Naive thymus-derived CD4-positive, alpha-beta T cell (primary cell): ENCODE measurements at regions of chrX and their contacts with region 1.

Region 1: GRCh38 chrX:119791438-119792231 is at the start of gene RPL39:
- DNase-seq: peak; percentile 61 to 88 (median 82)
- ATAC-seq: peak; percentile 96
- H3K4me3 ChIP-seq: peak within 1 kb of the TSS; percentile 85
- H3K4me3 Mint-ChIP-seq: peak within 1 kb of the TSS; percentile 87 to 96 (median 92)
- H3K27ac ChIP-seq: peak within 1 kb of the TSS; percentile 91
- H3K27ac Mint-ChIP-seq: peak within 1 kb of the TSS; percentile 89 to 98 (median 97)
- H3K4me1 ChIP-seq: peaks cover 16 to 24% of the 10 kb centered on the region in 2 donors
- H3K4me1 Mint-ChIP-seq: peaks cover 5 to 33% (median 21%) of the 10 kb centered on the region in 7 donors
- H3K27me3 ChIP-seq: no peaks in the 10 kb centered on the region
- H3K27me3 Mint-ChIP-seq: no peaks in the 10 kb centered on the region
- total RNA-seq, gene RPL39: 2,181 to 4,347 (median 3,799) TPM

Region 2: DNA sequence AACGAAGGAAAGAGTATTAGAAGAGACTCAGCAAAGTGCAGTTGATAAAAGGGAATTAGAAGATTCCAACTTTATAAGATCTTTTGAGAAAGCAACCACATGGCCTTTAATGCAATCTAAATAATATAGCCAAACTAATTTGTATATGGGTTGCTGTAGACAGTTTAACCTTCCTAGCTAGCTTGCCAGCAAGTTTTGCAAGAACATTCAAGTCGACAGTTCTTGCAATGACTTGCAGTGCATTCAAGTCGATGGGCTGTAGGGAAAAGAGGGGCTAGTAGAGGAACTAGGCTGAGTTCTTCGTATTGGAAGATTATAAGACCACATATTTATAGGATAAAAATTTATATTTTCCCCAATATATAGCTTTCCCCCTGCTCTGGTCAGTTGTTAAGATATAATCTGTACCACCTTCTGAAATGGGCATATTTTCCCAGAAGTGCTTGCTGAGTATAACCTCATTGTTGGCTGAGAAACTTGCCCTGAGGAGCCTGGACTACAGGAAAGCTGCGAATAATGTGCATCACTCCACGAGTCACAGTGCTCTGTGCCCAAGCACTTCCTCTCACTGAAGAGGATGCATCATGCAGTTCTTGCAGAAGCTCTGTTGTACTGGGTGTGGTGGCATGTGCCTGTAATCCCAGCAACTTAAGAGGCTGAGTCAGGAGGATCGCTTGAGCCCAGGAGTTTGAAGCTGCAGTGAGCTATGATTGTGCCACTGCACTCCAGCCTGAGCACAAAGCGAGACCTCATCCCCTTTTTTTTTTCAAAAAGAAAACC is 1239.3 kb before region 1 on chrX:
- CTCF ChIA-PET with region 1: no interaction called
- POLR2A ChIA-PET with region 1: no interaction called
- intact Hi-C with region 1: no loop called
- DNase-seq: no peak
- ATAC-seq: peak; percentile 74
- H3K4me3 ChIP-seq: no peak overlapping the region
- H3K4me3 Mint-ChIP-seq: no peak overlapping the region
- H3K27ac ChIP-seq: no peak overlapping the region
- H3K27ac Mint-ChIP-seq: peak overlapping the region in 4 of 9 donors; percentile 21 to 67 (median 42)
- H3K4me1 ChIP-seq: no peaks in the 10 kb centered on the region
- H3K4me1 Mint-ChIP-seq: peaks cover 4 to 30% (median 11%) of the 10 kb centered on the region in 7 donors
- H3K27me3 ChIP-seq: no peaks in the 10 kb centered on the region
- H3K27me3 Mint-ChIP-seq: no peaks in the 10 kb centered on the region

Region 3: GRCh38 chrX:119589810-119590209 is 201.8 kb before region 1 on chrX:
- CTCF ChIA-PET with region 1: no interaction called
- POLR2A ChIA-PET with region 1: no interaction called
- intact Hi-C with region 1: no loop called
- DNase-seq: no peak
- ATAC-seq: no peak
- H3K4me3 ChIP-seq: no peak overlapping the region
- H3K4me3 Mint-ChIP-seq: no peak overlapping the region
- H3K27ac ChIP-seq: no peak overlapping the region
- H3K27ac Mint-ChIP-seq: peak overlapping the region in 1 of 9 donors; percentile 42
- H3K4me1 ChIP-seq: no peaks in the 10 kb centered on the region
- H3K4me1 Mint-ChIP-seq: peaks cover 0 to 5% (median 0%) of the 10 kb centered on the region in 7 donors
- H3K27me3 ChIP-seq: no peaks in the 10 kb centered on the region
- H3K27me3 Mint-ChIP-seq: no peaks in the 10 kb centered on the region

Region 4: DNA sequence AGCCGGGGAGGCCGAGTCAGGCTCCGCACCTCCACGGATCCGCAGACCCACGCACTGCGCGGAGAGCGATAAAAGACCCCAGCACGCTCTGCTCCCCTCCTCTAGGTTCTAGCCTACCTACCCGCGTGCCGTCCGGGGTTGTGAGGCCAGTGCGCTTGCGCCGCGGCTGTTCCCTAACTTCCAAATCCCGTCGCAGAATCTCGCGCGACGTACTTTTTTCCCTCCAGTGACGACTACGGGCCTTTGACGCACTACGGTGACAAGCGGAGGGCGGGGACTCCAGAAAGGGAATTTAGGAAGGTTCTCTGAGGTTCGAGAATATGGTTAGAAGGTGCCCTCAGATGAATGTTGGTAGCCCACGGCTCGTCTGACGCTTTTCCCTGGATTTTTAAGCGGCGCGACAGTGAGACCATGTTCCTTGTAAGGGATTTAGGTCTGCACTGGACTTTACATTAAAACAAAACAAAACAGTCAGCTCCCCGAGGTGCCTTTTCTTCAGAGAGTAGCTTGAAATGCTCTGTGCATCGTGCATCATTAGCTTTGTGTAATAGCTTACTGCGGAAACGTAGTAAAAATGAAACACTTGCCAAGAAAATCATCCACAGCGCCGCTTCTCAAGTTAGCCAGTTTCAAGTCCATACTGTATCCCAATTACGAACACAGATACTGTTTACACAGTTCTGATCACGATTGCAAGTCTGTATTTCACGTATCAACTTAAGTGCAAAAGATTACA is 185.2 kb before region 1 on chrX and contains the start of gene NKRF:
- CTCF ChIA-PET with region 1: no interaction called
- POLR2A ChIA-PET with region 1: interaction called, 5 read pairs
- intact Hi-C with region 1: loop called (anchors 1 kb)
- DNase-seq: peak; percentile 76 to 92 (median 88)
- ATAC-seq: peak; percentile 88
- H3K4me3 ChIP-seq: peak within 1 kb of the TSS; percentile 71
- H3K4me3 Mint-ChIP-seq: peak within 1 kb of the TSS; percentile 93 to 100 (median 94)
- H3K27ac ChIP-seq: peak within 1 kb of the TSS; percentile 90
- H3K27ac Mint-ChIP-seq: peak within 1 kb of the TSS; percentile 91 to 99 (median 98)
- H3K4me1 ChIP-seq: peaks cover 5 to 11% of the 10 kb centered on the region in 2 donors
- H3K4me1 Mint-ChIP-seq: peaks cover 6 to 48% (median 39%) of the 10 kb centered on the region in 7 donors
- H3K27me3 ChIP-seq: no peaks in the 10 kb centered on the region
- H3K27me3 Mint-ChIP-seq: peaks cover 0 to 4% (median 0%) of the 10 kb centered on the region in 5 donors
- total RNA-seq, gene NKRF: 9.9 to 16.4 (median 14.0) TPM

Region 5: GRCh38 chrX:119826399-119826959 is 34.8 kb after region 1 on chrX:
- CTCF ChIA-PET with region 1: no interaction called
- POLR2A ChIA-PET with region 1: interaction called, 4 read pairs
- intact Hi-C with region 1: loop called (anchors 1 kb)
- DNase-seq: no peak
- ATAC-seq: no peak
- H3K4me3 ChIP-seq: no peak overlapping the region
- H3K4me3 Mint-ChIP-seq: no peak overlapping the region
- H3K27ac ChIP-seq: no peak overlapping the region
- H3K27ac Mint-ChIP-seq: peak overlapping the region in 5 of 9 donors; percentile 12 to 73 (median 56)
- H3K4me1 ChIP-seq: no peaks in the 10 kb centered on the region
- H3K4me1 Mint-ChIP-seq: peaks cover 0 to 23% (median 16%) of the 10 kb centered on the region in 7 donors
- H3K27me3 ChIP-seq: no peaks in the 10 kb centered on the region
- H3K27me3 Mint-ChIP-seq: no peaks in the 10 kb centered on the region

Region 6: GRCh38 chrX:119880552-119881437 is 89.2 kb after region 1 on chrX:
- CTCF ChIA-PET with region 1: interaction called, 3 read pairs
- POLR2A ChIA-PET with region 1: interaction called, 5 read pairs
- intact Hi-C with region 1: loop called (anchors 1 kb)
- DNase-seq: peak in 7 of 9 donors; percentile 21 to 57 (median 36)
- ATAC-seq: peak; percentile 93
- H3K4me3 ChIP-seq: no peak overlapping the region
- H3K4me3 Mint-ChIP-seq: no peak overlapping the region
- H3K27ac ChIP-seq: peak overlapping the region; percentile 20
- H3K27ac Mint-ChIP-seq: peak overlapping the region in 8 of 9 donors; percentile 36 to 88 (median 66)
- H3K4me1 ChIP-seq: peaks cover 0 to 7% of the 10 kb centered on the region in 2 donors
- H3K4me1 Mint-ChIP-seq: peaks cover 0 to 26% (median 18%) of the 10 kb centered on the region in 7 donors
- H3K27me3 ChIP-seq: no peaks in the 10 kb centered on the region
- H3K27me3 Mint-ChIP-seq: no peaks in the 10 kb centered on the region